CD14-positive monocyte (primary cell): ENCODE measurements at regions of chr1 and their contacts with region 1.

Region 1: GRCh38 chr1:158124999-158125398 is 55.7 kb upstream of the CD1D start:
- DNase-seq: peak; percentile 77 to 87 (median 78)
- H3K4me3 ChIP-seq: no peak overlapping the region
- H3K4me3 Mint-ChIP-seq: no peak overlapping the region
- H3K27ac ChIP-seq: no peak overlapping the region
- H3K27ac Mint-ChIP-seq: no peak overlapping the region
- H3K4me1 ChIP-seq: no peaks in the 10 kb centered on the region
- H3K4me1 Mint-ChIP-seq: peaks cover 7% of the 10 kb centered on the region
- H3K27me3 ChIP-seq: peaks cover 7 to 34% of the 10 kb centered on the region in 2 donors
- H3K27me3 Mint-ChIP-seq: peaks cover 20 to 41% (median 38%) of the 10 kb centered on the region in 3 donors
- CTCF ChIP-seq: peak; percentile 82

Region 2: GRCh38 chr1:157963713-157964112 is 161.3 kb before region 1 on chr1:
- intact Hi-C with region 1: loop called (anchors 2 to 10 kb)
- DNase-seq: peak; percentile 46 to 59 (median 47)
- H3K4me3 ChIP-seq: no peak overlapping the region
- H3K4me3 Mint-ChIP-seq: no peak overlapping the region
- H3K27ac ChIP-seq: no peak overlapping the region
- H3K27ac Mint-ChIP-seq: no peak overlapping the region
- H3K4me1 ChIP-seq: no peaks in the 10 kb centered on the region
- H3K4me1 Mint-ChIP-seq: peaks cover 3% of the 10 kb centered on the region
- H3K27me3 ChIP-seq: peaks cover 8 to 23% of the 10 kb centered on the region in 2 donors
- H3K27me3 Mint-ChIP-seq: peaks cover 6 to 28% (median 25%) of the 10 kb centered on the region in 3 donors
- CTCF ChIP-seq: peak; percentile 93

Region 3: GRCh38 chr1:157992031-157992832 is 132.8 kb before region 1 on chr1:
- intact Hi-C with region 1: loop called in 1 of 2 experiments (anchors 10 kb)
- DNase-seq: peak; percentile 12 to 35 (median 33)
- H3K4me3 ChIP-seq: no peak overlapping the region
- H3K4me3 Mint-ChIP-seq: peak overlapping the region; percentile 13 to 95
- H3K27ac ChIP-seq: no peak overlapping the region
- H3K27ac Mint-ChIP-seq: no peak overlapping the region
- H3K4me1 ChIP-seq: peaks cover 11 to 16% of the 10 kb centered on the region in 2 donors
- H3K4me1 Mint-ChIP-seq: peaks cover 16% of the 10 kb centered on the region
- H3K27me3 ChIP-seq: peaks cover 24 to 53% of the 10 kb centered on the region in 2 donors
- H3K27me3 Mint-ChIP-seq: peaks cover 44 to 69% (median 51%) of the 10 kb centered on the region in 3 donors
- CTCF ChIP-seq: peak; percentile 86

Region 4: GRCh38 chr1:158075078-158075477 is 49.9 kb before region 1 on chr1:
- intact Hi-C with region 1: no loop called
- DNase-seq: no peak
- H3K4me3 ChIP-seq: no peak overlapping the region
- H3K4me3 Mint-ChIP-seq: no peak overlapping the region
- H3K27ac ChIP-seq: no peak overlapping the region
- H3K27ac Mint-ChIP-seq: no peak overlapping the region
- H3K4me1 ChIP-seq: no peaks in the 10 kb centered on the region
- H3K4me1 Mint-ChIP-seq: no peaks in the 10 kb centered on the region
- H3K27me3 ChIP-seq: no peaks in the 10 kb centered on the region
- H3K27me3 Mint-ChIP-seq: peaks cover 0 to 3% (median 2%) of the 10 kb centered on the region in 3 donors
- CTCF ChIP-seq: no peak